B cell (primary cell): ENCODE measurements at regions of chr18 and their contacts with region 1.

Region 1: DNA sequence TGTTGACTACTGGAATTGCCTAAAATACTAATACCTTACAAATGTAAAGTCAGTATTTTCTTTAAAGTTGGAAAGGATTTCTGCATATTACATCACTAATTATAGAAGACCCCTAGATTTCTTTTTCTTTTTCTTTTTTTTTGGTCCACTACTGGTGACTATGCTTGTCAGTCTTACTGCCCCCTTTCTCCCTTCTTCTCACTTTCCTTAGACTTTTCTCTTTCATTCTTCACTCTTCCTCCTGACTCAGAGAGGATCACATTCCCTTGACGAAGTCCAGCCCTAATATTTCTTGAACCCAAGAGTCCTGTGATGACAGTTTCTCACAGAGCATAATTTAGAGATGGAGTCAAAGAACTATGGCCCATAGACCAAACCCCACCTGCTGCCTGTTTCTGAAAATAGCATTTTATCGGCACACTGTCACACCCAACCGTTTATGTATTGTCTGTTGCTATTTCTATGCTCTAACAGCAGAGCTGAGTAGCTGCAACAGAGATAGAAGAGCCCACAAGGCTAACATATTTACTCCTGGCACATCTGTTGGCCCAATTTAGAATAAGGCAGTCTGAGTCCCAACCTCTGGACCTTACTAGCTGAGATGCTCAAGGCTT is 40.6 kb upstream of the RIOK3 start:
- DNase-seq: no peak
- ATAC-seq: no peak
- H3K4me3 ChIP-seq: no peak overlapping the region
- H3K4me3 Mint-ChIP-seq: no peak overlapping the region
- H3K27ac ChIP-seq: no peak overlapping the region
- H3K27ac Mint-ChIP-seq: no peak overlapping the region
- H3K4me1 ChIP-seq: peaks cover 0 to 3% of the 10 kb centered on the region in 2 donors
- H3K4me1 Mint-ChIP-seq: peaks cover 5% of the 10 kb centered on the region
- H3K27me3 ChIP-seq: no peaks in the 10 kb centered on the region
- H3K27me3 Mint-ChIP-seq: no peaks in the 10 kb centered on the region
- CTCF ChIP-seq: no peak

Region 2: DNA sequence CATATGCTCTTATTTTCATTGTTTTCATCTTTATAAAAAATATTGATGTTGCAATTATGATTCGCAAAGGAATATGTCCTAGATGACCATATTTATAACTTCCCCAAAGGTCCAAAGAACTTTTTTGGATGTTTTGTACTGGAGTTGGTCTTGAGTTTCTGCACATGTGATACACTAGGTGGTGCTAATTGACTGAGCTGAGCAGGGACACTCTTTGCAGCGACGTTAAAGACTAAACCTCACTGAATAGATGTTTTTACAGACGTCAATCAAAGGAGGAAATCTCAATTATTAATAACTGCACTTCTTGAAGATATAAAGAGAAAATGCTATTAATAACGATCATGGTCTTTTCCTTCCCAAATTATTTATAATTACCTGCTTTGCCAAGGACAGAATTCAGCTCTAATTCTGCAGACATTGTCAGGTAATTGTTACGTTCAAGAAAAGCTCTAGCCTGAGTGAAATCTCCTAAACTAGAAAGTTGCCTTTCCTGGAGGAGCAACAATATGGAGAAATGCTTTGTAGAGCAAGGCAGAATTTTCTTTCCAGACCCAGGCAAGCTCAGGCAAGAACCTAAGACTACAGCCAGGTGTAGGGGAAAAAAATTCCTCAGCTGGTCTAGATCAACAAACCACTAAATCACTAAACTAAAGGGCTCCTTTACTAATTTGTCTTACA is 598.7 kb before region 1 on chr18:
- CTCF ChIA-PET with region 1: interaction called, 19 read pairs
- POLR2A ChIA-PET with region 1: no interaction called
- intact Hi-C with region 1: loop called (anchors 1 kb)
- DNase-seq: peak; percentile 44
- ATAC-seq: no peak
- H3K4me3 ChIP-seq: no peak overlapping the region
- H3K4me3 Mint-ChIP-seq: no peak overlapping the region
- H3K27ac ChIP-seq: no peak overlapping the region
- H3K27ac Mint-ChIP-seq: no peak overlapping the region
- H3K4me1 ChIP-seq: no peaks in the 10 kb centered on the region
- H3K4me1 Mint-ChIP-seq: no peaks in the 10 kb centered on the region
- H3K27me3 ChIP-seq: no peaks in the 10 kb centered on the region
- H3K27me3 Mint-ChIP-seq: peaks cover 16% of the 10 kb centered on the region
- CTCF ChIP-seq: peak; percentile 61

Region 3: DNA sequence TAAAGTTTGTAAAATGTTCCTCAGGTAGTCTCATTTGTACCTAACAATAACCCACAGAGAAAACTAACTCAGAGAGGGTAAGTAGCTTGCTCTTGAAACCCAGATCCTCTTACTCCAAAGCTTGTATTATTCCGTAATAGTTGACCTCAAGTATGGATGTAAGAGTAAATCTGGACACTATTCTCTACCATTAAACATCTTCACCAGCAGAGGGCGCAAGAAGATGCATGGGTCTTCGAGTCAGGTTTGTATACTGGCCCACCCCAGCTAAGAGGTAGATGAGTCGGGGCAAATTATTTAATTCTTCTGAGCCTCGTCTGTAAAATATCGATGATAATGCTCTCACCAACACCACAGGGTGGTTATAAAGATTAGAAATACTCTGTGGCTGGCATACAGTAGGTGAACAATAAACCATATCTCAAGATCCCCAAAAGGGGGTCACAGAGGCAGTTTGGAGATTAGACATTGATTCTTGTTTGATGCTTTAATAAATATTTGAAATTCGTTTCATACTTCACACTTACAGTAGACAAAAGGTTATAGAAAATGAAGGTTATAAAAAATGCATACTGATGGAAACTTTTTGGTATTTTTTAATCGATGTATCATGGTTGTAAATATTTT is 280.7 kb before region 1 on chr18:
- CTCF ChIA-PET with region 1: interaction called, 24 read pairs
- POLR2A ChIA-PET with region 1: interaction called, 4 read pairs
- intact Hi-C with region 1: loop called (anchors 1 kb)
- DNase-seq: peak; percentile 85
- ATAC-seq: no peak
- H3K4me3 ChIP-seq: no peak overlapping the region
- H3K4me3 Mint-ChIP-seq: no peak overlapping the region
- H3K27ac ChIP-seq: no peak overlapping the region
- H3K27ac Mint-ChIP-seq: no peak overlapping the region
- H3K4me1 ChIP-seq: peaks cover 24 to 28% of the 10 kb centered on the region in 2 donors
- H3K4me1 Mint-ChIP-seq: peaks cover 21% of the 10 kb centered on the region
- H3K27me3 ChIP-seq: peaks cover 0 to 33% (median 16%) of the 10 kb centered on the region in 4 experiments
- H3K27me3 Mint-ChIP-seq: peaks cover 16% of the 10 kb centered on the region
- CTCF ChIP-seq: peak; percentile 95

Region 4: GRCh38 chr18:23401400-23402347 is 10.8 kb before region 1 on chr18:
- CTCF ChIA-PET with region 1: interaction called, 13 read pairs
- POLR2A ChIA-PET with region 1: no interaction called
- intact Hi-C with region 1: no loop called
- DNase-seq: no peak
- ATAC-seq: no peak
- H3K4me3 ChIP-seq: no peak overlapping the region
- H3K4me3 Mint-ChIP-seq: no peak overlapping the region
- H3K27ac ChIP-seq: no peak overlapping the region
- H3K27ac Mint-ChIP-seq: no peak overlapping the region
- H3K4me1 ChIP-seq: no peaks in the 10 kb centered on the region
- H3K4me1 Mint-ChIP-seq: no peaks in the 10 kb centered on the region
- H3K27me3 ChIP-seq: no peaks in the 10 kb centered on the region
- H3K27me3 Mint-ChIP-seq: no peaks in the 10 kb centered on the region
- CTCF ChIP-seq: no peak

Region 5: GRCh38 chr18:23528580-23529472 is 116.4 kb after region 1 on chr18:
- CTCF ChIA-PET with region 1: no interaction called
- POLR2A ChIA-PET with region 1: no interaction called
- intact Hi-C with region 1: no loop called
- DNase-seq: no peak
- ATAC-seq: no peak
- H3K4me3 ChIP-seq: no peak overlapping the region
- H3K4me3 Mint-ChIP-seq: no peak overlapping the region
- H3K27ac ChIP-seq: no peak overlapping the region
- H3K27ac Mint-ChIP-seq: peak overlapping the region; percentile 20
- H3K4me1 ChIP-seq: no peaks in the 10 kb centered on the region
- H3K4me1 Mint-ChIP-seq: peaks cover 1% of the 10 kb centered on the region
- H3K27me3 ChIP-seq: no peaks in the 10 kb centered on the region
- H3K27me3 Mint-ChIP-seq: no peaks in the 10 kb centered on the region
- CTCF ChIP-seq: no peak